ENCODE measurements at regions of chr7 and their contacts with region 1.

Region 1: DNA sequence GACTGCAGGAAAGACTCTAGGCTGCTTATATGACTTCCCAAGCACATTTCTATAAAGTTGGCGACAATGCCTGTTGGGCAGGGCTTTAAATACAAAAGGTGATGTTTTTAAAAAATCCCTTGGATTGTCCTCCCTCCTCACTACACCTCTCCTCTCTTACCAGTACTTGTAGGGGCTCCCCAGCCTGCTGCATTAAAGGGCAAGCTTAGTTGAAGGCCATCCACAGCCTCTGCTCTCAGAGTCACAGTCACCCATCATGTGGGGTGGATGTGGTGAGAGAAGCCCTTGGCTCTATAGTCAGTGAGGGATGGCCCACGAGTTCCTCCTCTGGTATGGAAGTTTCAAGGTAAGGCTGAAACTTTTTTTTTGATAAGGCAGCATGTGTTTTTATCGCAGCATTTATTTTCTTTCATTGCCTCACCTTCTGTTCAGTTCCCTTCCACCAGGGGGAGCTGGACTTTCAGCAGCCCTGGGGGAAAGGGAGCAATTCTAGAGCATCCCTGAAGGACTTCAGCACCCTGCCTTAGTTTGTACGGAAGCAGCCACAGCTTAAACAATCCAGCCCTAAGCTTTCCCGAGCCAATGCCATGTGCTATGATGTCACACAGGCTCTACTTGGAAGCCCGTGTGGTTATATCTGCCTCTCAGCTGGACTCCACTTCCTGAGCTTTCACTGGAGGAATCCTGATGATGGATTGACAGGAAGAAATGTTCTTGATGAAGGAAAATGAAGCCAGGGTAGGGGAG is 131.9 kb downstream of the CALCR start:
- DNase-seq: peak; percentile 40 to 73
- H3K4me3 ChIP-seq: no peak overlapping the region
- H3K4me1 ChIP-seq: peaks cover 21% of the 10 kb centered on the region
- H3K27me3 ChIP-seq: no peaks in the 10 kb centered on the region

Region 2: DNA sequence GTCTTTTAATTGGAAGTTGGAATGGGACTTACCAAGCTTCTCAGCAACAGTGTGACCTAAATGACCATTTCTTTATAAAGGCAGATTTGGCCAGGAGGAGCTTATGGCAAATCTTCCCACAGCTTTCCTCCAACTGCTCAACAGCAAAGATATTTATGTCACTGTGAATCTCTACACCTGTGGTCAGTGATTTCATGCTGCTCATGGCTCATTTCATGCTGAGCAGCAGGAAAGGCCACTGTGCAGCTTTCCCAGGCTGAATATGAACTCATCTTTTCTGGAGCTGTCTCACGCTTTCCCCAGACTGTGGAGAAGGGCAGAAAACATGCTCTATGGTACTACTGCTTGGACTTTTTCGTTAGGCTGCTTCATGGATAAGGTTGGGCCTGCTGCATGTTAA is 102.0 kb after region 1 on chr7:
- in situ Hi-C with region 1: loop called (anchors 25 kb)
- DNase-seq: no peak
- H3K4me3 ChIP-seq: no peak overlapping the region
- H3K4me1 ChIP-seq: peaks cover 6% of the 10 kb centered on the region
- H3K27me3 ChIP-seq: no peaks in the 10 kb centered on the region